ENCODE measurements at regions of chr15 and their contacts with region 1.

Region 1: DNA sequence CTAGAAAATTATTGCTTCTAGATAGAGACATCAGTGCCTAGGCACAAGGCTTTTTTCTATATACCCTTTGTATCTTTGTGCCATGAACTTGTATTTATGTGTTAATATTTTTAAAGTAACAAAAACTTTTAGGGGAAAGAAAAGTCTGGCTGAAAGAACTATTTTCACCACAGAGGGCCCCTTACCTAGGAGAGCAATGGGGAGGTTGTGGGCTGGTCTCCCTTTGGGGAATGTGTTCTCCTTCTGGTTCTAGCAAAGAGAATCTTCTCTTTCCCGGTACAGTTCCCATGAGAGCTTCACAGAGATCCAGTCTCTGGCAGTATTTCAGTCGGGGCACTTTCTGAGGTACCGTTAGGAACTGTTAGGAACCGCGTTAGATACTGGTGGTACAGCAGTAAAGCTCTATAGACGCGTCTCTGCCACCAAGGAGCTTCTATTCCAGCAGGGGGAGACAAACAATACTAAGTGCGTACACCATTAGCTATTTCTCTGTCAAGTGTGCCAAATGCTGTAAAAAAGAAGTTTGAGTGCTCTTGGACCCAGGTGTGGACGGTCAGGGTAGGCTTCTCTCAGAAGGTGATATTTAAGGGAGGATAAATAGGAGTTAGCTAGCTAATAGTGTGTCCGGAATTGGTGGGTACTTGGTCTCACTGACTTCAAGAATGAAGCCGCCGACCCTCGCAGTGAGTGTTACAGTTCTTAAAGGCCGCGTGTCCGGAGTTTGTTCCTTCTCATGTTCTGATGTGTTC is 4.6 kb upstream of the EPB42 start:
- DNase-seq: peak in 1 of 10 donors; percentile 28

Region 2: GRCh38 chr15:42800731-42801474 is 424.5 kb before region 1 on chr15:
- intact Hi-C with region 1: no loop called
- DNase-seq: peak in 2 of 10 donors; percentile 63 to 77

Region 3: GRCh38 chr15:43133430-43134156 is 91.8 kb before region 1 on chr15 and contains the start of gene TMEM62:
- intact Hi-C with region 1: no loop called
- DNase-seq: peak; percentile 58 to 94 (median 70)

Region 4: DNA sequence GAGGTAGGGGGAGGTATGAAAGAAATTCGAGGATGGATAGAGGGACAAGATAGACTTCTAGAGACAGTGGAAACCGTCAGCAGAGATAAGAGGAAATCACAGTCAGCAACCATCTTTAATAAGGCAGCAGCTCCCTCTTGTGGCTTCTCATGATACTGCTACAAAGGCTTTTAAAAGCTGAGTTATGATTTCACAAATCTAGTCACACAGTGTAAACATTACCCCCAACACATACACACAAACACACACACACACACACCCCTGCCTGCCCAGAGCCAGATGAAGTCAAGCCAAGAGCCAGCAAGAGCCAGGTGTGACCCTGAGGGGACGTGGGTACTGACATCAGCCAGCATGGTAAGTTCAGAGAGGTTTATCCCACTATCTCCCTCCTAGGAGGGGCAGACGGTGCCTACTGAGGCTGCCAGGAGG is 60.2 kb after region 1 on chr15:
- intact Hi-C with region 1: loop called (anchors 1 kb)
- DNase-seq: peak in 3 of 10 donors; percentile 31 to 57 (median 38)

Region 5: DNA sequence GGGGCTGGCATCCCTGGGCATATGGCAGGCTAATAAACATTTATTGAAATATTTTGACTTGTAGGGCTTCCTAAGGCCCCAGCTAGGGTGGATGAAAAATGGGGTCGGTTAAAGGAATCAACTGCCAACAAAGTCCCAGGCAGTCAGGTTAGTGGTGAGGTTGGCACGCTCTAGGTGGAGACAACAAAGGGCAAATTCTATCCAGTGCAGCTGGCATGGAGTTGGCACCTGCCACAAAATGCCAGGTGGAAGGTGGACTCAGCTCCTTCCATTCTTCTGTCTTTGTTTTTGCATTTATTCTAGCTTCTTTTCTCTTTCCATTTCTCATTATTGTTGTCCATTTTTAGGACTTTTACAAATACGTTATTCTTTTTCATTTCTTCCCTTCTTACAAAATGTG is 74.0 kb after region 1 on chr15:
- intact Hi-C with region 1: no loop called
- DNase-seq: no peak

Region 6: GRCh38 chr15:43510200-43511011 is 285.0 kb after region 1 on chr15:
- intact Hi-C with region 1: no loop called
- DNase-seq: peak; percentile 96 to 100 (median 99)